Dendritic cell treated with granulocyte-macrophage colony-stimulating factor and Interleukin-4, amounts not matched to agents 40 ng/mL and 50 ng/mL, for 4 days (primary cell): ENCODE measurements at regions of chr18 and their contacts with region 1.

Region 1: DNA sequence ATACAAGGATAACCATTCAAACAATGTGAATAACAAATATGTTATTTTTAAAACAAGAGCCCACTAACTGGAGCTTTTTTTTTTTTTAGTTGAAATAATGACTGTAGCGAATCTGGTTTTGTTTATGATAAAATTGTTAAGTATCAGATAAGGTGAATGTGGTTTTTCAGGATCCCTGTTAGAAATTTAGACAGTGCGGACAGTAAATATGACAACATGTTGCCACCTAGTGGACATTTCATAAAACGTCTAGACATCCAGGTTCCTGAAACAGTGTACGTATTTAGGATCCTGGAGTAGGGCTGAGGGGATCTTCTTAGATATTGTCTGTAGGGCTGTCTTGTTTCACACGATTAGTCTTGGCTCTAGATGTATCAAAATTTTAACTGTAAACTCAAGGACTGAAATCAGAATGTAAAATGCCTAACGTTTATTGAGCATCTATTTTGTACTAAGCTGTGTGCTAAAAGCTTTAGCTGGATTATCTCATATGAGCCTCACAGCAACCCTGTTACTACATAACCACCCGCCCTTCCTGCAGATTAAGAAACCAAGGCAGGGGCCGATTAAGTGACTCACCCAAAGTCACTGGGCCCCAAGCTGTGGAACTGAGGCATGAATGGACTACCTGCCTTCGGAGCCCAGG is 23.9 kb upstream of the CCDC68 start:
- H3K4me3 Mint-ChIP-seq: no peak overlapping the region
- H3K27ac Mint-ChIP-seq: no peak overlapping the region
- H3K4me1 Mint-ChIP-seq: no peaks in the 10 kb centered on the region
- H3K27me3 Mint-ChIP-seq: peaks cover 7% of the 10 kb centered on the region

Region 2: DNA sequence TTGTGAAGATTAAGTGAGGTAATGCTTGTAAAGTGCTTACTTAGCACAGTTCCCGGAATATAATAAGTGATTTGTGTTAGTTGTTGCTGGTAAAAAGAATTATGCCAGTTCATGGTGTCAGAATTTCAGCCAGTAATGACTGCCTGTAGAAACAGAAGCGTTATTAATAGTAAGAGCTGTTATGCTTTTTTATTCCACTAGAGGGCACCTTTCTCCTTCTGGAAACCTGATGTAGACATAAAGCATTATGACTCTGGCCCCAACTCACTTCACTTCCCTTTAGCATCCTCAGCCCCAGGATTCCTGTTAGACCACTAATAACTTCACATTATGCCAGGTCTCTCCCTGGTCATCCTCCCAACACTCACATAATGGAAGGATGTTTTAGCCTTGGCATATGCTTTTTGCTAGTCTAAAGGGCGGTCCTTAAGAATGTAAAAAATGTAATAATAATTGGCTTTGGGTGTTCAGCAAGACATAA is 590.6 kb before region 1 on chr18:
- intact Hi-C with region 1: loop called (anchors 5 kb)
- H3K4me3 Mint-ChIP-seq: no peak overlapping the region
- H3K27ac Mint-ChIP-seq: no peak overlapping the region
- H3K4me1 Mint-ChIP-seq: peaks cover 13% of the 10 kb centered on the region
- H3K27me3 Mint-ChIP-seq: peaks cover 3% of the 10 kb centered on the region

Region 3: DNA sequence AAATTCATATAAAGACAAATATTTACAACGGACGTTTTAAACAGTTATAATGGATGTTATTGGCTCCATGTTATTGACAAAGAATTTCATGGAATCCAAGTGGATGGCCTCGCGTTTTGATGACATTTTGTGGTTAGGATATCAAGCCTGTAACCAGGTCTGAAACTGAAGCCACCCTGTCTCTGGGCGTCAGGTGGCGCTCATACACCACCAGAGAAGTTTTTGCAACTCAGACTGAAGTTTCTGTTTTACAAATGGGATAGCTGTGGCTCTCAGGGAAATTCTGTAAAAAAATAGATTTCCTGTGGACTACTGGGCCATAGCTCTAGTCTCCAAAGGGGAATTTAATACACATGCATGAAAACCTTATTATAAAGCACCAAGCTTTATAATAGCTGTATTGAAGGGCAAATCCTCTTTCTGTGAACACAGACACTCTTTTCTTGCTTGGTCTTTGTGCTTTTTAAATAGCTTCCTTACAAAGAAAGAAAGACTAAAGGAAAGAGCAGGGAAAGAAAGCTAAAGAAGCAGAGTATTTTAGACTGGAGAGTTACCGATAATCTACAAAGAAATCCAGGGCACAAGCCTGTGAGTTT is 538.7 kb before region 1 on chr18:
- intact Hi-C with region 1: loop called (anchors 2 kb)
- H3K4me3 Mint-ChIP-seq: no peak overlapping the region
- H3K27ac Mint-ChIP-seq: no peak overlapping the region
- H3K4me1 Mint-ChIP-seq: no peaks in the 10 kb centered on the region
- H3K27me3 Mint-ChIP-seq: peaks cover 3% of the 10 kb centered on the region

Region 4: GRCh38 chr18:54558609-54559585 is 424.3 kb before region 1 on chr18:
- intact Hi-C with region 1: loop called (anchors 1 kb)
- H3K4me3 Mint-ChIP-seq: no peak overlapping the region
- H3K27ac Mint-ChIP-seq: no peak overlapping the region
- H3K4me1 Mint-ChIP-seq: no peaks in the 10 kb centered on the region
- H3K27me3 Mint-ChIP-seq: peaks cover 2% of the 10 kb centered on the region

Region 5: DNA sequence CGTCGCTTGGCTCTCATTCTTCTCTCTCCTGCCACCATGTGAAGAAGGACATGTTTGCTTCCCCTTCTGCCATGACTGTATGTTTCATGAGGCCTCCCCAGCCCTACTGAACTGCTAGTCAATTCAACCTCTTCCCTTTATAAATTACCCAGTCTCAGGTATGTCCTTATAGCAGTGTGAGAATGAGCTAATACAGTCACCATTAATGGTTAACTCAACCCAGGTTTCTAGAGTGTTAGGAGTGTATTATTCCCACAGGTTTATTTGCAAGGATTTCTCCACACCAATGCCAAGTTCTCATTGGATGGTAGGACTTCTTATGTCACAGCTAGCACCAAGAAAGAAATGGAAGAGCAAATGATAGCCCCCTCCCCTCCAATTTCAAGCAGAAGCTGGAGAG is 320.2 kb before region 1 on chr18:
- intact Hi-C with region 1: no loop called
- H3K4me3 Mint-ChIP-seq: no peak overlapping the region
- H3K27ac Mint-ChIP-seq: no peak overlapping the region
- H3K4me1 Mint-ChIP-seq: no peaks in the 10 kb centered on the region
- H3K27me3 Mint-ChIP-seq: no peaks in the 10 kb centered on the region

Region 6: DNA sequence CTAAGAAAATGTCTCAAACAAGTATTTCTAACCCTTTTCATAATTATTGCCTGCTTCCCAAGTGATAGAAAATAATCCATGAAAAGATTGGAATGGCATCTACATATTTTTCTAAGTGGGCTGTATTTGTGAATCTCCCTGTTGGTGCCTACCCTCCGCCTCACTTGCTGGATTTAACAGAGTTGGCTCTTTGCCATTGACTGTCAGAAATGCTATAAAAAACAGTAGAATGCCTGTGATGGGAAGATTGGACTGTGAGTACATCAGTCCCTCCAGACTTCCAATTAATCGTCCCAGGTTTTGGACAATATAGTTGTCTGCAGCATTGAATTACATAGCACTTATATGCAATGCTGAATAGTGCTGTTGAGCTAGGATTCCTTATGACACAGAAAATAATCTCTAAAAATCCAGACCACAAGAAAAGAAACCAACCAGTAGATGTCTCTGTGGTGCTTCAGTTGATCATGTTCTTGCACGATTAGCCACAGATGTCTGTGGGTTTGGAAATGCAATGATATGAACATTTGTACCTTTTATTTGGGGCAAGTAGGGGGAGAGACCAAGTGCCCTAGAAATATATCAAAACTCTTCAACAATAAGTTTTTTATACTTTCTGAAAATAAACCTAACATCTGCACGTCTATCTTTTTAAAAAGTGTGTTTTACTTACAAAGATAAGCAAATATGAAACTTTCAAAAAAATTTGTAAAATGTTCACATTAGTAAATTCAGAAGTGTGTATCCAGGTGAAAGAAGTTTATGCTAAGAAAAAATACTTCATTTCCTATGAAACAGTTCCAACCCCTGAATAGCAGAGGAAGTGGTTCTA is 303.6 kb before region 1 on chr18:
- intact Hi-C with region 1: loop called (anchors 2 kb)
- H3K4me3 Mint-ChIP-seq: no peak overlapping the region
- H3K27ac Mint-ChIP-seq: no peak overlapping the region
- H3K4me1 Mint-ChIP-seq: no peaks in the 10 kb centered on the region
- H3K27me3 Mint-ChIP-seq: peaks cover 3% of the 10 kb centered on the region

Region 7: GRCh38 chr18:54961016-54961423 is 22.1 kb before region 1 on chr18:
- intact Hi-C with region 1: no loop called
- H3K4me3 Mint-ChIP-seq: no peak overlapping the region
- H3K27ac Mint-ChIP-seq: no peak overlapping the region
- H3K4me1 Mint-ChIP-seq: peaks cover 45% of the 10 kb centered on the region
- H3K27me3 Mint-ChIP-seq: peaks cover 35% of the 10 kb centered on the region